ENCODE measurements at regions of chr5 and their contacts with region 1.

Region 1: DNA sequence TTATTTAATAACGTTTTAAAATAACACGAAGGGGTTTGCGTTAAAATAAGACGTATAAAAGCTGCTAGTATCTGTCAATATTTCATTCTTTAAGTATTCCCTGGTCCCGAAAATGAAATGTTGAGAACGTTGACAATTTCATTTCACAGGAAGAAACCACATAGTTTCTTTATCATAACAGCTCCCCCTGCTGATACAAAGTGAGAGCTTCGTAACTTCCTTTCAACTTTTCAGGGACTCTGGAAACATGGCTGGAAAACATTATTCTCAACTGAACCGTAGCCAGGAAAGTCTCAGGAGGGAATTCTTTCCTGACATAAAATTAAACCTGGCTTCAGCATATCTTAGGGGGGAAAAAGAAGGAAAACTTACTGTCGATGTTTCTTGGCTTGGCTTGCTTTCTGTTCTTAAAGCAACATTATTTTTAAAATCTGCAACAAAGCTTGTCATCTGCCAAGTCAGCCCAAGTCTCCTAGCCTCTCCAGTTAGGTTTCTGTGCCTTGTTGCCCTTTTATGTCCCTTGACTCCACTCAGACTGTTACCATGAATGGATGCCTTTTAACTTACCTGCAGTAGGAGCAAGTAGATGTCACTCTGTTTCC is 122.9 kb upstream of the DAB2 start:
- DNase-seq: peak; percentile 42

Region 2: DNA sequence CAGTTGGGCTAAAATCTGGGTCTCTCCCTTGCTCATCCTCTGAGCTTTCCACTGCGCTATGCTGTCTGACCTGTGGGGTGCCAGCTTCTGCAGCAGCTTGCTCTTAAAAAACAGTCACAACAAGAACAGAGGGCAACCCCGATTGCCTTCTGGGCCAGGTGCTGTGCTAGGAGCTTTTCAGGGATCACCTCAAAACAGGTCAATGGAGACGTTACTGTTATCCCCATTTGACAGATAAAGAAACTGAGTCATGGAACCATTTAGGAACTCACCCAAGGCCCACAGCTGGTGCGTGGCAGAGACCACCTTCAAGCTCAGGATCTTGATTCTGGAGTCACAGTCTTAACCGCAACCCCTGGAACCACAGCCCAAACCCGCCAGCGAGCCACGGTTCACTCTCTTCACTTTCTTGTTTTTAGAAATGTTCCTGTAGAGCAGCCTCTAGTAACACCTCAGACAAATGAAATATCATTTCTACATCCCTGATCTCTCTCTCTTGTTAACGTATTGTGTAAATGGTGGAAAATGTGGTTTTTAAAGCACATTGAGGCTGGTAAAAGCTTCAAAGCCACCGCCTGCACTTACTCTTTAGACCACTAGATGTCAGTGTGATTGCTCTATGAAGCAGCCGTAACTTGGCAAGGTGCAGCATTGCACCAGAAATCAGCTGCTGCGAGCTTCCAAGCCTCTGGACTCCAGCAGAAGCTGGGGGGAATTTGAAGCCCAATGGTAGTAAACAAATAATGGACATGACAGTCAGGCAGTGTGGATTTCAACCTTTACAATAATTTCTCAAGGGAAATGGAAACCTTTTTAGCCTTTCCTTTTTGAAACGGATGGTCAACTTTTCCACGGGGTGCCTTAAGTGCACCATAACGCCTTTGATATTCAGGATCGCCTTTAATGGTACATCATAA is 330.0 kb before region 1 on chr5:
- CTCF ChIA-PET with region 1: interaction called, 15 read pairs
- POLR2A ChIA-PET with region 1: no interaction called
- DNase-seq: peak; percentile 75

Region 3: GRCh38 chr5:39376293-39376714 is 171.3 kb before region 1 on chr5:
- CTCF ChIA-PET with region 1: interaction called, 31 read pairs
- POLR2A ChIA-PET with region 1: no interaction called
- DNase-seq: peak; percentile 59

Measured in HEK293T (cell line).